ENCODE measurements at regions of chr19 and their contacts with region 1.

Region 1: DNA sequence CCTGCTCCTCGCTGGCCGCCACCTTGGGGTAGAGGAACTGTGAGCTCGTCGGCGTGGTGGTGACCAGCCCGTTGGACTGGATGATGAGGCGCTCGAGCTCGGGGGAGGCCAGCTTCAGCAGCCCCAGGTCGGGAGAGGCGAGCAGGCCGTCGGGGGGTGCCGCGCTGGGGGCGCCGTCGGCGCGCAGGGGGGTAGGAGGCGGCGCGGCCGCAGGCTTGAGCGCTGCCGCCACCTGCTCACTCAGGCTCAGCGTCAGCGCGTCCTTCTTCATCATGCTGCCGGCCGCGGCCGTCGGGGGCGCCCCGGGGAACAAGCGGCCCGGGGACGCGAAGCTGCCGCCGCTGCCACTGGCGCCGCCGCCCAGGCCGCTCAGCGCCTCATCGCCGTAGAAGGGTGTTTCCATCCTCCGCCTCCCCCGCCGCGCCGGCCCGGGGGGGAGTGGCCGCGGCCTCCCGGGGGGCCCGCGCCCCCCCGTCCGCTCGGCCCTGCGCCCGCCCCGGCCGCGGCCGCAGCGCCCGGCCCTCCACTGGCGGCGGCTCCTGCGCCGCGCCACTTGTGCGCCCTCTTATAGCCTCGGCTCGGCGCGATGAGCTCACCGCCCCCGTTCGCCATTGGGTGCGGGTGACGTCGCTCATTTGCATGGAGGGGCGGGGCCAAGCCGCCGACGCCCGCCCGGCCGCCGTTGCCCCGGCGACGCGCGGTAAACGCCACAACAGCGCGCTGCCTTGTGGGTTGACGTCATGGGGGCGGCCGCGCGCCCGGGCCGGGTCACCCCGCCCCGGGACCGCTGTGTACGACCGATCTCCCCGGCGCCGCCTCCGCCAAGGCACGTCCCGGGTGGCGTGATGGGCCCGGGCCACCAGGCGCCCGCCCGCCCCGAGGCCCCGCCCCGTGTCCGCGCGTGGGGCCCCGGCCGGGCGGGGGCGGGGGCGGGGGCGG is at the start of gene JUND:
- DNase-seq: peak; percentile 94
- H3K4me3 ChIP-seq: peak within 1 kb of the TSS; percentile 97
- H3K27ac ChIP-seq: peak within 1 kb of the TSS; percentile 99
- H3K27me3 ChIP-seq: no peaks in the 10 kb centered on the region
- CTCF ChIP-seq: no peak
- polyA plus RNA-seq, gene JUND: 48.6 and 67.8 TPM in 2 replicates

Region 2: GRCh38 chr19:18239303-18239702 is 42.0 kb before region 1 on chr19:
- CTCF ChIA-PET with region 1: interaction called, 10 read pairs
- POLR2A ChIA-PET with region 1: interaction called, 4 read pairs
- DNase-seq: no peak
- H3K4me3 ChIP-seq: no peak overlapping the region
- H3K27ac ChIP-seq: no peak overlapping the region
- H3K27me3 ChIP-seq: peaks cover 5% of the 10 kb centered on the region
- CTCF ChIP-seq: no peak

Region 3: GRCh38 chr19:18291590-18292461 is 10.5 kb after region 1 on chr19:
- CTCF ChIA-PET with region 1: interaction called, 32 read pairs
- POLR2A ChIA-PET with region 1: interaction called, 130 read pairs
- DNase-seq: no peak
- H3K4me3 ChIP-seq: peak overlapping the region; percentile 69
- H3K27ac ChIP-seq: peak overlapping the region; percentile 94
- H3K27me3 ChIP-seq: no peaks in the 10 kb centered on the region
- CTCF ChIP-seq: no peak

Region 4: GRCh38 chr19:18322759-18323460 is 41.6 kb after region 1 on chr19 and contains the start of gene LSM4:
- CTCF ChIA-PET with region 1: interaction called, 122 read pairs
- POLR2A ChIA-PET with region 1: interaction called, 92 read pairs
- DNase-seq: peak; percentile 89
- H3K4me3 ChIP-seq: peak within 1 kb of the TSS; percentile 79
- H3K27ac ChIP-seq: peak within 1 kb of the TSS; percentile 69
- H3K27me3 ChIP-seq: no peaks in the 10 kb centered on the region
- CTCF ChIP-seq: peak; percentile 33
- polyA plus RNA-seq, gene LSM4: 58.6 and 69.3 TPM in 2 replicates

Region 5: GRCh38 chr19:18340190-18340989 is 59.0 kb after region 1 on chr19 and contains the start of gene PGPEP1:
- CTCF ChIA-PET with region 1: interaction called, 15 read pairs
- POLR2A ChIA-PET with region 1: interaction called, 18 read pairs
- DNase-seq: no peak
- H3K4me3 ChIP-seq: peak within 1 kb of the TSS; percentile 83
- H3K27ac ChIP-seq: no peak within 1 kb of the TSS
- H3K27me3 ChIP-seq: peaks cover 2% of the 10 kb centered on the region
- CTCF ChIP-seq: no peak
- polyA plus RNA-seq, gene PGPEP1: 22.0 and 29.1 TPM in 2 replicates

Region 6: GRCh38 chr19:18373892-18374629 is 92.7 kb after region 1 on chr19:
- CTCF ChIA-PET with region 1: no interaction called
- POLR2A ChIA-PET with region 1: no interaction called
- DNase-seq: peak; percentile 96
- H3K4me3 ChIP-seq: no peak overlapping the region
- H3K27ac ChIP-seq: peak overlapping the region; percentile 96
- H3K27me3 ChIP-seq: no peaks in the 10 kb centered on the region
- CTCF ChIP-seq: no peak

Region 7: DNA sequence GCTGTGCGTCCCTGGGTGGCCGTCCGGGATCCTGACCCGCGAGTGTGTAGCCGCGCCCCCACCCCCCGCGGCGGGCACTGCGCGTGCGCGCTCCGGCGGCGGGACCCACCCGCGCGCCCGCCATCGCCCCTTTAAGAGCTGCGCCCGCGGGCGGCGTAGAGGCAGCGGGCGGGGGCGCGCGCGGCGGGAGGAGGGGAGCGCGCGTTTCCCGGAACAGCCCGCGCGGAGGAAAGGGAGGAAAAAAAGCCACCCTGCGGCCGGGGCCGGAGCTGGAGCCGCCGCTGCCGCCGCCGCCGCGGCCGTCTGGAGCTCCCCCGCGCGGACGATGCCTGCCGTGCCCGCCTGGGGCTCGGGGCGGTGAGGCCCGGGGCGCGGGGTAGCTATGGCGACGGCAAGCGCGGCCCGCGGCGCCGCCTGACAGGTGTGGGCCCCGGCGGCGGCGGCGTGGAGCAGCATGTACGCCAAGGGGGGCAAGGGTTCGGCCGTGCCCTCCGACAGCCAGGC is 137.9 kb after region 1 on chr19 and contains the start of gene SSBP4:
- CTCF ChIA-PET with region 1: interaction called, 12 read pairs
- POLR2A ChIA-PET with region 1: interaction called, 18 read pairs
- DNase-seq: no peak
- H3K4me3 ChIP-seq: peak within 1 kb of the TSS; percentile 71
- H3K27ac ChIP-seq: peak within 1 kb of the TSS; percentile 47
- H3K27me3 ChIP-seq: no peaks in the 10 kb centered on the region
- CTCF ChIP-seq: 0 out of 2 replicates have a peak, but pooled peaks have one; percentile 18
- polyA plus RNA-seq, gene SSBP4: 9.4 and 12.6 TPM in 2 replicates

Measured in AG04450 (cell line).